Breast epithelium (tissue), 4 donors: ENCODE measurements at regions of chrX and their contacts with region 1.

Region 1: GRCh38 chrX:110987292-110987691 is 108.7 kb upstream of the PAK3 start:
- DNase-seq: no peak
- H3K4me3 ChIP-seq: no peak overlapping the region
- H3K27ac ChIP-seq: no peak overlapping the region
- H3K4me1 ChIP-seq: no peaks in the 10 kb centered on the region
- H3K27me3 ChIP-seq: peaks cover 0 to 62% of the 10 kb centered on the region in 2 donors
- CTCF ChIP-seq: no peak
- POLR2A ChIP-seq: no peak

Region 2: DNA sequence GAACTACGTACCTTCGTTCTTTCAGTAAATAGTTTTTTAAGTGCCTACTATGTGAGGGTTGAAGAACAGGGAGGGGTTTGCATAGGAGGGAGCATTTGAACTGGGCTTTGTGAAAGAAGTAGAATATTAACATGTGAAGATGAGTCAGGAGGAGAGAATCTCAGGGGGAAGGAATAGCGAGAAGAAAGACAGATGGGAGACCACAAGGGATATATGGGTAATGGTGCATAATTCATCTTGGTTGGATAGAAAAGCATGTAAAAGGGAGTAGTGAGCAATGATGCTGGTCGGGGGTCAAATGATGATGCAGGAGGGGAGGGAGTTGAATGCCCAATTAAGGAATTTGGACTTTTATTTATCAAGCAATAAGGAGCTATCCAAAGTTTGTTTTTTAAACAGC is 931.7 kb before region 1 on chrX:
- intact Hi-C with region 1: loop called (anchors 5 kb)
- DNase-seq: no peak
- H3K4me3 ChIP-seq: no peak overlapping the region
- H3K27ac ChIP-seq: no peak overlapping the region
- H3K4me1 ChIP-seq: no peaks in the 10 kb centered on the region
- H3K27me3 ChIP-seq: peaks cover 0 to 26% of the 10 kb centered on the region in 2 donors
- CTCF ChIP-seq: no peak
- POLR2A ChIP-seq: no peak

Region 3: DNA sequence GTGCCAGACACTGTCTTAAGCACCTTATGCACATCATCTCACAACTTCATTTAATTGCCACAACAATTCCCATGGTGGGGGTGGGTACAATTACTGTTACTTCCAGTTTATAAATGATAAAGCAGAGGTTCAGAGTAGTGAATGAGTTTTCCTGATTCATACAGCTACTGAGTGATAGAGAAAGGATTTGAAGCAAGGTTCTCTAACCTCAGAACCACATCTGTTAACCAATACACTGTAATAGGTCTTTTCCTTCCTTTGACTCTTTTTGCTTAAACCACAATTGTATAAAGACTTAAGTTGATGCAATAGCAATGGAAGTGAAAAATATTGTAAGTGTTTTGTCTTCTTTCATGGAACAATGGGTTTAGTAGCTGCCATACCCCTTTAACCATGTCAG is 65.2 kb after region 1 on chrX:
- intact Hi-C with region 1: no loop called
- DNase-seq: no peak
- H3K4me3 ChIP-seq: no peak overlapping the region
- H3K27ac ChIP-seq: no peak overlapping the region
- H3K4me1 ChIP-seq: no peaks in the 10 kb centered on the region
- H3K27me3 ChIP-seq: peaks cover 0 to 36% of the 10 kb centered on the region in 2 donors
- CTCF ChIP-seq: no peak
- POLR2A ChIP-seq: no peak